GM12878 (cell line): ENCODE measurements at regions of chrX and their contacts with region 1.

Region 1: DNA sequence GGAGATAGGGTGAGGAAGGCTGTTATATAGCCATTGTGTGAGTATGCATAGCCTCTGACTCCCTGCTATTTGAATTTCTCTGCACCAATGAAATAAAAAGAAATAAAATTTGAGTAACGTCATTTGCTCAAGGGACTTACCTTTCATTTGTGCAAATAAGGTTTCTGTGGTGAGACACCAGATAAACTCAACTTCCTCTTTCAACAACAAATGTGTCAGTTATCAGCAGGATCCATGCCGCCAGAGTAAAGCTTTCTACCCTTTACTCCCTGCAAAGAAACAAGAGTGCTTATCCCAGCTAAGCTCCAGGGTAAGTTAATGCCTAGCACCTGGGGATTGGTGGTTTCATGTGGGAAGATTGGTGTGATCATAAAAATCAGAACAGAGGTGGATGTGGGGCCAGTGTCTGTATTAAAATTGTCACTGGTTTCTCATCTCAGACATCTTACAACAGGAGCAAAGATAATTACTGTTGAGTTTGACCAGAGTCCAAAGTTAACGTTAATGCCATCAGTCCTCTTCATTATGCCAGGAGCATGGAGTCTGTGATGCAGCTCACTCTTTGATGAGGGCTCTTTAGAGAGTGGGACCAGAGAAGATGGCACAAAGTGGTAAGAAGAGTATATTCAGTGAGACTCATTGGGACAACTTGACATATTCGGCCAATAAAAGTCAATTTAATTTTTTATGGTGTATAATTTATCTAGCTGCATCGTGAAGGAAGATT is at the start of gene P2RY10:
- DNase-seq: peak; percentile 85
- ATAC-seq: peak; percentile 79
- H3K4me3 ChIP-seq: peak within 1 kb of the TSS; percentile 86
- H3K27ac ChIP-seq: peak within 1 kb of the TSS; percentile 84
- H3K4me1 ChIP-seq: peaks cover 10% of the 10 kb centered on the region
- H3K27me3 ChIP-seq: no peaks in the 10 kb centered on the region
- CTCF ChIP-seq: no peak
- EP300 ChIP-seq: peak; percentile 88 to 90
- POLR2A ChIP-seq: peak; percentile 67
- RAD21 ChIP-seq: no peak
- polyA plus RNA-seq, gene P2RY10: 43.8 to 71.9 TPM

Region 2: GRCh38 chrX:78066110-78066509 is 879.2 kb before region 1 on chrX:
- CTCF ChIA-PET with region 1: no interaction called
- POLR2A ChIA-PET with region 1: no interaction called
- RAD21 ChIA-PET with region 1: no interaction called
- SMC1A ChIA-PET with region 1: no interaction called
- in situ Hi-C with region 1: no loop called
- intact Hi-C with region 1: loop called (anchors 10 kb)
- DNase-seq: no peak
- ATAC-seq: no peak
- H3K4me3 ChIP-seq: no peak overlapping the region
- H3K27ac ChIP-seq: peak overlapping the region; percentile 87
- H3K4me1 ChIP-seq: peaks cover 19% of the 10 kb centered on the region
- H3K27me3 ChIP-seq: no peaks in the 10 kb centered on the region
- CTCF ChIP-seq: no peak
- EP300 ChIP-seq: no peak
- POLR2A ChIP-seq: no peak
- RAD21 ChIP-seq: no peak

Region 3: DNA sequence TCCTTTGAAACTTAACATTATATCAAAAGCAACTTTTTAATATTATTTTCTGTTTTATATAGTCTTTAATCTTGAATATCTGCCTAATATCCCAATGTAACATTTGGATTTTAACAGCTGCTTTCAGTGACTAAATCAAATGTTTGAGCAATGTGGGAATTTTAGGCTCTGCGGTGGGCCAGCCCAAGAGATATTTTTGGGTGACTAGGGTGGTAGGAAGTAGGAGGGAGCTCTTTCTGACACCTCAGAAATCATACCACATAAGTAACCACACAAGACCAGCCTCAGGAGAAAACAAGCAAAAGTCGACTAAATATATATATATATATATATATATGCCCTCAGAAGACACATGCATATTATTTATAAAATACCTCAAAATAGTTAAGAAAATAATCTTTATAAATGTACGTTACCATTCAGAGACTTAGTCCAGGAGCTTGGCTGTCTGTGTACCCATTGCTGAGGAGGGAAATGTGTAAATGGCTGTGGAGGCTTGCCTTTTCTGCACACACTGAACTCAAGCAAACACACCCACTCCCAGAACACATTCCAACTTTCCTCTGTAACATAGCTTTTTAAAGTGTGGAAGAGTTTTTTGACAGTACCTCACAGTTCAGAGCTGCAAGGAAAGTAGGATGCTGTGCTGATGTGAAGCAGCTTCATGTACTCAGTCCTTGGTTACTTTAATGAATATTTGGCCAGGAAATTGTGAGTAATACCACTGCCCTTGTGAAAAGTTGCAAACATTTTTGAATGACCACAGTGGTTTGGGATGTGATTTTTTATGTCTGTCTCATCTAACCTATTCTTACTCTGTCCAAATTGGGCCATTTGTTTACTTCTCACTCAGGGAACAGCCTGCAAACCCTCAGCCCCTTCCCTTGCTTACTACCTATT is 286.3 kb before region 1 on chrX and contains the start of gene RTL3:
- CTCF ChIA-PET with region 1: no interaction called
- POLR2A ChIA-PET with region 1: no interaction called
- RAD21 ChIA-PET with region 1: interaction called, 3 read pairs
- SMC1A ChIA-PET with region 1: no interaction called
- in situ Hi-C with region 1: no loop called
- intact Hi-C with region 1: loop called (anchors 5 kb)
- DNase-seq: no peak
- ATAC-seq: peak; percentile 70
- H3K4me3 ChIP-seq: no peak within 1 kb of the TSS
- H3K27ac ChIP-seq: no peak within 1 kb of the TSS
- H3K4me1 ChIP-seq: 0 out of 2 replicates have a peak, but pooled peaks cover 3% of the 10 kb centered on the region
- H3K27me3 ChIP-seq: no peaks in the 10 kb centered on the region
- CTCF ChIP-seq: no peak
- EP300 ChIP-seq: no peak
- POLR2A ChIP-seq: no peak
- RAD21 ChIP-seq: no peak
- polyA plus RNA-seq, gene RTL3: 0.09 TPM in 1 of 2 experiments, not detected in the other

Region 4: DNA sequence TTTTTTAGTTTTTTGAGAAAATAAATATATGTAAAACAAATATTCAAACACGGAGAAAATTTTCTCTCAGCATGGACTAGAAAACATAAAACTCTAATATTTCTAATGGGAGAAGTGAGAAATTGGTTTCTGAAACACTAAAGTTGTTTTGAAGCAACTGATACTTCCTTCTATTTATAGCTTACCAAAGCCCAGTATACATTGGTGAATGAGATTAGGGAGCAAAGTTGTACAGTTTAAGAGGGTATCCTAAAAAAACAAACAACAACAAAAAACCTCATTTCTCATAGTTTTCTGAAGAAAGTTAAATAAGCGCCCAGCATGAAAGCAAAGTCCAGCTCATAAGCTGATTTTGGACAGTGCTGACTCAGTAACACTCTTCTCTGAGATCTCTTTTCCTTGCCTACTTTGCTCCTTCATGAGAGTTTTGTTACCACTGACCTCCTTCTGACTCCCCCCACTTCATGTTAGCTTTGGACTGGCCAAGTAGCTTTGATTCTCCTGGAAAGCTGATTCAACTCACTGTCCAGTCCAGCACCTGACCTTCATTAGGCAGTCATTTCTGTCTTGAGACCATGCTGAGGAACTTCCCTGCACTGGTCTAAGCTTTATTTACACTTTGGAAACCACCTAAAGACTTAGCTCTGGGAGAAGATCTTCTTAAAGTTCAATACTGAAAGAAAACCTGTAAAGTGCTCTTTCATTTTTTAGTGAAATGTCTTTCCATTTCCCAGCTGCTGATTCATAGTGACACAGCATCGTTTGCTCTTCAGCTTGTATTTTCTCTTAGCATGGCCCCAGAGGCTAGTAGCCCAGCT is 21.9 kb before region 1 on chrX:
- CTCF ChIA-PET with region 1: interaction called, 14 read pairs
- POLR2A ChIA-PET with region 1: interaction called, 39 read pairs
- RAD21 ChIA-PET with region 1: interaction called, 121 read pairs
- SMC1A ChIA-PET with region 1: interaction called, 84 read pairs
- in situ Hi-C with region 1: no loop called
- intact Hi-C with region 1: loop called (anchors 1 kb)
- DNase-seq: peak; percentile 87
- ATAC-seq: peak; percentile 95
- H3K4me3 ChIP-seq: peak overlapping the region; percentile 49
- H3K27ac ChIP-seq: peak overlapping the region; percentile 99
- H3K4me1 ChIP-seq: peaks cover 9% of the 10 kb centered on the region
- H3K27me3 ChIP-seq: no peaks in the 10 kb centered on the region
- CTCF ChIP-seq: no peak
- EP300 ChIP-seq: peak; percentile 68 to 72; a peak in 2 of 4 replicates
- POLR2A ChIP-seq: no peak; the same call in 1 of the 2 replicates
- RAD21 ChIP-seq: 0 out of 2 replicates have a peak, but pooled peaks have one; percentile 3

Region 5: GRCh38 chrX:78979789-78980464 is 34.6 kb after region 1 on chrX:
- CTCF ChIA-PET with region 1: interaction called, 3 read pairs
- POLR2A ChIA-PET with region 1: no interaction called
- RAD21 ChIA-PET with region 1: interaction called, 7 read pairs
- SMC1A ChIA-PET with region 1: interaction called, 8 read pairs
- in situ Hi-C with region 1: no loop called
- intact Hi-C with region 1: loop called (anchors 5 kb)
- DNase-seq: peak; percentile 84
- ATAC-seq: peak; percentile 98
- H3K4me3 ChIP-seq: peak overlapping the region; percentile 37; the same call in 1 of the 2 replicates
- H3K27ac ChIP-seq: peak overlapping the region; percentile 76
- H3K4me1 ChIP-seq: peaks cover 14% of the 10 kb centered on the region; the same call in 1 of the 2 replicates
- H3K27me3 ChIP-seq: no peaks in the 10 kb centered on the region
- CTCF ChIP-seq: no peak
- EP300 ChIP-seq: peak; percentile 68 to 86; a peak in 3 of 4 replicates
- POLR2A ChIP-seq: no peak
- RAD21 ChIP-seq: no peak

Region 6: GRCh38 chrX:79153348-79153747 is 208.0 kb after region 1 on chrX:
- CTCF ChIA-PET with region 1: interaction called, 4 read pairs
- POLR2A ChIA-PET with region 1: interaction called, 5 read pairs
- RAD21 ChIA-PET with region 1: interaction called, 11 read pairs
- SMC1A ChIA-PET with region 1: interaction called, 5 read pairs
- in situ Hi-C with region 1: loop called (anchors 5 kb)
- intact Hi-C with region 1: loop called (anchors 5 kb)
- DNase-seq: no peak
- ATAC-seq: peak; percentile 48
- H3K4me3 ChIP-seq: no peak overlapping the region
- H3K27ac ChIP-seq: peak overlapping the region; percentile 8; the same call in 1 of the 2 replicates
- H3K4me1 ChIP-seq: peaks cover 2% of the 10 kb centered on the region; the same call in 1 of the 2 replicates
- H3K27me3 ChIP-seq: no peaks in the 10 kb centered on the region
- CTCF ChIP-seq: no peak
- EP300 ChIP-seq: no peak
- POLR2A ChIP-seq: no peak
- RAD21 ChIP-seq: no peak